ENCODE measurements at regions of chr3 and their contacts with region 1.

Region 1: DNA sequence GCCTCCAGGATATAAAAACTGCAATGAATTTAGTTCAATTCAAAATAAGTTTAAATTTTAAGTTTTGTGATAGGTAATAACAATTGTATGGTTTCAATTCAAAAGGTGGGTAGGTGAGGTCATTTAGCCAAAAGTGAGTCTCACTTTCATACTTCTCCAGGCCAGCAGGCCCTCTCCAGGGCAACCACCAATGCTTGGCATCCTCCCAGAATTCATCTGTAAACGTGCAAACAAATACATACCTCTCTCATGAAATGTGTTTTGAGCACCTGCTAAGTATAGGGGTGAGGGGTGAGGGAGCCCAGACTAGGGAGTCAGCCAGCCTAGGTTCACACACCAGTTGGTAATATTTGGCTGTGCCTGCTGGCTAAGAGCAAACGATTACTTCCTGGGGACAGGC is 22.0 kb upstream of the RBSN start:
- DNase-seq: peak; percentile 24
- ATAC-seq: peak; percentile 87
- H3K4me3 ChIP-seq: no peak overlapping the region
- H3K27ac ChIP-seq: no peak overlapping the region
- H3K4me1 ChIP-seq: peaks cover 14% of the 10 kb centered on the region
- H3K27me3 ChIP-seq: no peaks in the 10 kb centered on the region
- CTCF ChIP-seq: no peak
- EP300 ChIP-seq: no peak
- POLR2A ChIP-seq: no peak
- RAD21 ChIP-seq: no peak

Region 2: GRCh38 chr3:14774431-14774830 is 346.6 kb before region 1 on chr3:
- CTCF ChIA-PET with region 1: no interaction called
- POLR2A ChIA-PET with region 1: no interaction called
- RAD21 ChIA-PET with region 1: no interaction called
- SMC1A ChIA-PET with region 1: no interaction called
- in situ Hi-C with region 1: no loop called
- intact Hi-C with region 1: no loop called
- DNase-seq: no peak
- ATAC-seq: no peak
- H3K4me3 ChIP-seq: no peak overlapping the region
- H3K27ac ChIP-seq: no peak overlapping the region
- H3K4me1 ChIP-seq: no peaks in the 10 kb centered on the region
- H3K27me3 ChIP-seq: no peaks in the 10 kb centered on the region
- CTCF ChIP-seq: no peak
- EP300 ChIP-seq: no peak
- POLR2A ChIP-seq: no peak
- RAD21 ChIP-seq: no peak

Region 3: GRCh38 chr3:15108082-15108545 is 12.9 kb before region 1 on chr3:
- CTCF ChIA-PET with region 1: interaction called, 45 read pairs
- POLR2A ChIA-PET with region 1: no interaction called
- RAD21 ChIA-PET with region 1: no interaction called
- SMC1A ChIA-PET with region 1: interaction called, 9 read pairs
- in situ Hi-C with region 1: no loop called
- intact Hi-C with region 1: no loop called
- DNase-seq: no peak
- ATAC-seq: peak; percentile 99
- H3K4me3 ChIP-seq: no peak overlapping the region
- H3K27ac ChIP-seq: no peak overlapping the region
- H3K4me1 ChIP-seq: no peaks in the 10 kb centered on the region
- H3K27me3 ChIP-seq: no peaks in the 10 kb centered on the region
- CTCF ChIP-seq: peak; percentile 94 to 98 (median 94)
- EP300 ChIP-seq: no peak
- POLR2A ChIP-seq: no peak
- RAD21 ChIP-seq: peak; percentile 82

Region 4: GRCh38 chr3:15180042-15180611 is 59.1 kb after region 1 on chr3:
- CTCF ChIA-PET with region 1: interaction called, 10 read pairs
- POLR2A ChIA-PET with region 1: no interaction called
- RAD21 ChIA-PET with region 1: interaction called, 8 read pairs
- SMC1A ChIA-PET with region 1: interaction called, 3 read pairs
- in situ Hi-C with region 1: no loop called
- intact Hi-C with region 1: no loop called
- DNase-seq: peak; percentile 40
- ATAC-seq: peak; percentile 92
- H3K4me3 ChIP-seq: peak overlapping the region; percentile 34; the same call in 1 of the 2 replicates
- H3K27ac ChIP-seq: peak overlapping the region; percentile 35
- H3K4me1 ChIP-seq: peaks cover 8% of the 10 kb centered on the region; the same call in 1 of the 2 replicates
- H3K27me3 ChIP-seq: no peaks in the 10 kb centered on the region
- CTCF ChIP-seq: no peak
- EP300 ChIP-seq: peak; percentile 17 to 18; a peak in 1 of 4 replicates
- POLR2A ChIP-seq: no peak
- RAD21 ChIP-seq: no peak

Region 5: DNA sequence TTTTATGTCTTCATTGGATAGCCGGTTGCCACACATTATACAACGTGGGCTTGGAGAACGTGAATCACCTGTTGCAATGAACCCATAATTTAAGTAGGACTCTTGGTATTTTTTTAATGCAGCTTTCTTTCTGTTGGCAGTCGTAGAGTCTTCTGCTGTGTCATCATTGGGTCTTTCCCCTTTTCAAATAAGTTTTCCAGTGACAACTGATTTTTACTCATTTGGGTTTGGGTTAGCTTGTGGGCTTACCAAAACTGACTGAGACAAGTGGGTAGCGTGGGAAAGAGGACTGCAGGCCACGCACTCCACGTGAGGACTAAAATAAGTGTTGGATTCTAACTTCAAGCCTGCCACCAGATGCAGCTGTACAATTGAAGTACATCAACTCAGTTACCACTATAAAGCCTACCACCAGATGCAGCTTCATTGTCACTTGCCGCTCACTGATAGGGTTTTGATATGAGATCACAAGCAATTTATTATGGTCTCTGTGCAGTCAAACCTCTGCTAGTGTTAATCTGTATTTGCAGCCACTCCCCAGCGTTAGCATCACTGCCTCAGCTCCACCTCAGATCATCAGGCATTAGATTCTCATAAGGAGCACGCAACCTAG is 78.6 kb after region 1 on chr3:
- CTCF ChIA-PET with region 1: interaction called, 123 read pairs
- POLR2A ChIA-PET with region 1: interaction called, 3 read pairs
- RAD21 ChIA-PET with region 1: interaction called, 17 read pairs
- SMC1A ChIA-PET with region 1: interaction called, 49 read pairs
- in situ Hi-C with region 1: loop called (anchors 5 kb)
- intact Hi-C with region 1: no loop called
- DNase-seq: no peak
- ATAC-seq: no peak
- H3K4me3 ChIP-seq: no peak overlapping the region
- H3K27ac ChIP-seq: no peak overlapping the region
- H3K4me1 ChIP-seq: no peaks in the 10 kb centered on the region
- H3K27me3 ChIP-seq: no peaks in the 10 kb centered on the region; a peak in 1 of 4 replicates
- CTCF ChIP-seq: no peak
- EP300 ChIP-seq: no peak
- POLR2A ChIP-seq: no peak
- RAD21 ChIP-seq: no peak

Region 6: DNA sequence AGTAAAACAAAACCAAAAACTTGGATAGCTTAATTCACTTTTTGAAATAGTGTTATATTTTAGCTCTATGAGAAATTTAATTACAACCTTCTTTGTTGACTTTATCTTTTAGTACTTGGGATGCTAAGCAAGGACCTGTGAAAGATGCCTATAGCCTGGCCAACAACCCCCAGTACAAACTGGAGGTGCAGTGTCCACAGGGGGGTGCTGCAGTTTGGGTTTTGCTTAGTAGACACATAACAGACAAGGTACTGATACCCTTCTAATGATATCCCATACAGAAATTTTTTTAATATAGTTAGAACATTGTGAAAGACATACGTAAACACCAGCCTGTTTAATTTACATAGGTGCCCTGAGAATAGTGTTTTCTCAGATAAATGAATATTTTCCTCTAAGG is 120.4 kb after region 1 on chr3:
- CTCF ChIA-PET with region 1: interaction called, 10 read pairs
- POLR2A ChIA-PET with region 1: no interaction called
- RAD21 ChIA-PET with region 1: interaction called, 3 read pairs
- SMC1A ChIA-PET with region 1: interaction called, 4 read pairs
- in situ Hi-C with region 1: no loop called
- intact Hi-C with region 1: no loop called
- DNase-seq: no peak
- ATAC-seq: peak; percentile 88
- H3K4me3 ChIP-seq: no peak overlapping the region
- H3K27ac ChIP-seq: no peak overlapping the region
- H3K4me1 ChIP-seq: no peaks in the 10 kb centered on the region
- H3K27me3 ChIP-seq: no peaks in the 10 kb centered on the region
- CTCF ChIP-seq: peak; percentile 36 to 54 (median 47); a peak in 5 of 6 replicates
- EP300 ChIP-seq: no peak
- POLR2A ChIP-seq: no peak
- RAD21 ChIP-seq: peak; percentile 55